Esophagus muscularis mucosa (tissue), 4 donors: ENCODE measurements at regions of chr20 and their contacts with region 1.

Region 1: GRCh38 chr20:45044084-45044573 is 56.8 kb downstream of the KCNS1 start:
- DNase-seq: no peak
- H3K4me3 ChIP-seq: no peak overlapping the region
- H3K27ac ChIP-seq: no peak overlapping the region
- H3K4me1 ChIP-seq: peaks cover 0 to 22% (median 10%) of the 10 kb centered on the region in 4 donors
- H3K27me3 ChIP-seq: no peaks in the 10 kb centered on the region
- CTCF ChIP-seq: peak; percentile 79 to 88 (median 85)
- EP300 ChIP-seq: no peak
- POLR2A ChIP-seq: no peak

Region 2: GRCh38 chr20:45095753-45096371 is 51.7 kb after region 1 on chr20:
- intact Hi-C with region 1: loop called (anchors 5 kb)
- DNase-seq: no peak
- H3K4me3 ChIP-seq: no peak overlapping the region
- H3K27ac ChIP-seq: no peak overlapping the region
- H3K4me1 ChIP-seq: peaks cover 6 to 28% (median 17%) of the 10 kb centered on the region in 4 donors
- H3K27me3 ChIP-seq: peaks cover 0 to 60% (median 29%) of the 10 kb centered on the region in 4 donors
- CTCF ChIP-seq: peak; percentile 52 to 79 (median 64)
- EP300 ChIP-seq: no peak
- POLR2A ChIP-seq: no peak

Region 3: DNA sequence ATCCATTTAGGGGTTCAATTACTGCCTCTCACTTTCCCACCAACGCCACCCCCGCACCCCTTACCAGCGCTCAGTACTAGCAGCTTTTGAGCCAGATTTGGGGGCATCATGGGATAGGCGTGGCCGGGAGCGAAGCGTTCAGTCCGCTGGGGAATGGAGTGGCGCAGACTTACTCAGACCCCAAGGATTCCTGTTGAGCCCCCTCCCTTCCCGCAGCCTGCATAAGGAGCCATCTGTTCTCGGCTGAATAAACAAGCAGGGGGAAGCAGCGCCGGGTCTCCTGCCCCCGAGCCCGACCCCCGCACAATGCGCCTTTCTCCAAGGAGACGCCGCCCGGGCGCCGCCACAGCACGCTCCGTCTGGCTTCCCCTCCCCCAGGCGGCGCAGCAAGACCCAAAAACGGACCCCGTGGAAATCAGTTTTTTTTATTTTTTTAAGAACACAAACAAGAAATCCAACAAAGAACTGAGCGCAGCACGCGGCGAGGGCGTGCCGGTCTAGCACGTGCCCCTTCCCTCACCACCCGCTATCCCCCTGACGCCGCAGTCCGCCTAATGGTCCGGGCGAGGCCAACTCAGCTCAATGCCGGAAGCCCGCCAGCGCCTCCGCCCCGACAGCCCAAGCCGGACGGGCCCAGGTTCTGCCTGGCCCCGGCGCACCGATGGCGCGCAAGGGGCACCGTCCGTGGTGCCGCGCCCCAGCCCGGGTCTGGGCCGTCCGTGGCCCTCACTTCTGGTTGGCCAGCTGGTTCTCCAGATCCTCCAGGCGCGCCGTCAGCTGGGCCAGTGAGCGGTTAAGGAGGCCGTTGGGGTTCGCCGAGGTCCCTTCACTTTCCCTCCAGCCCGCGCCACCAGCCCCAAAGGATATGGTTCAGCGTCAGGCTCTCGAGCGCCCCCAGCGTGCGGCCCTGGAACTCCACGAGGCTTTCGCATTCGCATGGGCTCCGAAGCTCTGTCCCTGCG is 249.2 kb after region 1 on chr20:
- intact Hi-C with region 1: loop called (anchors 5 kb)
- DNase-seq: peak; percentile 97
- H3K4me3 ChIP-seq: peak overlapping the region; percentile 56 to 74 (median 60)
- H3K27ac ChIP-seq: peak overlapping the region in 2 of 4 donors; percentile 44 to 53
- H3K4me1 ChIP-seq: peaks cover 15 to 26% (median 22%) of the 10 kb centered on the region in 4 donors
- H3K27me3 ChIP-seq: peaks cover 0 to 51% (median 8%) of the 10 kb centered on the region in 4 donors
- CTCF ChIP-seq: peak; percentile 82 to 100 (median 87)
- EP300 ChIP-seq: no peak
- POLR2A ChIP-seq: no peak